ENCODE measurements at regions of chrX and their contacts with region 1.

Region 1: DNA sequence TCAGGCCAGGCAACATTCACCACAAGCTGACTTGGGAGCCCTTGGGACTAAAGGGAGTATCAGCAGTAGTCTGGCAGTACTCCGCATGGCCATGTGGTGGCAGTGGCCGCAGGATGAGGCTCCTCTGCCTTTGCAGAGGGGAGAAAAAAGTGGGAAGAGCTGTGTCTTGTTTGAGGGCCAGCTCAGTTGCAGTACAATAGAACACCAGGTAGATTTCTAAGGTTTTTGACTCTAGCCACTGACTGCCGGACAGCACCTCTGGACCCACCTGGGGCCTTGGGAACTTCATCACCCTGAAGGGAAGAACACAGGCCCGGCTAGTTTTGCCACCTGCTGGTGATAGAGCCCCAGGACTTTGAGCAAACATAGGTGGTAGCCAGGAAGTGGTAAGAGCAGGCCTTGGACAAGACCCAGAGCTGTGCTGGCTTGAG is 414.6 kb downstream of the OPHN1 start:
- DNase-seq: peak; percentile 66
- ATAC-seq: peak; percentile 95
- H3K4me3 Mint-ChIP-seq: no peak overlapping the region
- H3K27ac Mint-ChIP-seq: no peak overlapping the region
- H3K4me1 Mint-ChIP-seq: peaks cover 5% of the 10 kb centered on the region; the same call in 1 of the 2 replicates
- H3K27me3 Mint-ChIP-seq: peaks cover 11% of the 10 kb centered on the region
- CTCF ChIP-seq: no peak; the same call in 1 of the 2 replicates

Region 2: GRCh38 chrX:67949270-67949669 is 69.4 kb before region 1 on chrX:
- CTCF ChIA-PET with region 1: no interaction called
- POLR2A ChIA-PET with region 1: no interaction called
- DNase-seq: no peak
- ATAC-seq: no peak
- H3K4me3 Mint-ChIP-seq: no peak overlapping the region
- H3K27ac Mint-ChIP-seq: no peak overlapping the region
- H3K4me1 Mint-ChIP-seq: no peaks in the 10 kb centered on the region
- H3K27me3 Mint-ChIP-seq: no peaks in the 10 kb centered on the region
- CTCF ChIP-seq: no peak

Region 3: DNA sequence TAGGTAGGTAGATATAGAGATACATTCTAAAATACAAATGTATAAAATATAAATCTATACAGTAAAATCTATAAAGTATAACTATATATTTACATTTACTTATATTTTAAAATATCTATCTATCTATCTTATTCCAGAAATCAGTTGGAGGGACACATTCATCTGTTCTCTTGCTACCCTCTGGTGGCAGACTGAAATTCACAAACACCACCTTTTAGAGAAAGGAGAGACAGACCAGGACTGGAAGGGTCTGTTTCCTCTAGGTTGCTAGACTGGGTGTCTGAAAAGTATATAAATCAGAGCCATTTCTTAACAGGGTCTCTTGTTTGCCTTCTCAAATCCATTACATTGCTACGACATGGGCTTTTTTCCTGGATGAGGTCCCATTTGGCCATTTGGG is 71.6 kb after region 1 on chrX:
- CTCF ChIA-PET with region 1: interaction called, 12 read pairs
- POLR2A ChIA-PET with region 1: no interaction called
- DNase-seq: no peak
- ATAC-seq: no peak
- H3K4me3 Mint-ChIP-seq: no peak overlapping the region
- H3K27ac Mint-ChIP-seq: no peak overlapping the region
- H3K4me1 Mint-ChIP-seq: no peaks in the 10 kb centered on the region
- H3K27me3 Mint-ChIP-seq: no peaks in the 10 kb centered on the region
- CTCF ChIP-seq: no peak

Region 4: DNA sequence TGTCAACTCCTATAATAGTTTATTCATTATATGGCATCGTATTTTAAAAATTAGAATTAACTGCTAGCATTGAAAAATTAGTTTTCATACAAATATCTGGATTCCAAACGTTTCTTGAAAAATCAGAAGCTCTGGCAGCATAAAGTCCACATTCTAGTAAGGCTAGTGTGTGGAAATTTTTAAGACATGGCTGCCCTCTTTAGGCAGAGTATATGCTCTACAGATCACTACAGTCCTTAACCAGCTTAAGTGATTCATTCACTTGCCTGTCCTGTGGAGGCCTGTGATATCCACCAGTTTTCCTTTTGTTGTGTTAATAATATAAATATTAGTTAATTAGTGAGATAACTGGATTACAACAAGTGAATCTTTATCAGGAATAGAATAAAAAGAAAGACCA is 127.4 kb after region 1 on chrX:
- CTCF ChIA-PET with region 1: interaction called, 19 read pairs
- POLR2A ChIA-PET with region 1: no interaction called
- DNase-seq: no peak
- ATAC-seq: peak; percentile 87
- H3K4me3 Mint-ChIP-seq: no peak overlapping the region
- H3K27ac Mint-ChIP-seq: no peak overlapping the region
- H3K4me1 Mint-ChIP-seq: no peaks in the 10 kb centered on the region
- H3K27me3 Mint-ChIP-seq: no peaks in the 10 kb centered on the region
- CTCF ChIP-seq: no peak

Region 5: GRCh38 chrX:68203646-68204045 is 184.9 kb after region 1 on chrX:
- CTCF ChIA-PET with region 1: no interaction called
- POLR2A ChIA-PET with region 1: no interaction called
- DNase-seq: no peak
- ATAC-seq: no peak
- H3K4me3 Mint-ChIP-seq: no peak overlapping the region
- H3K27ac Mint-ChIP-seq: no peak overlapping the region
- H3K4me1 Mint-ChIP-seq: no peaks in the 10 kb centered on the region
- H3K27me3 Mint-ChIP-seq: no peaks in the 10 kb centered on the region
- CTCF ChIP-seq: no peak